ENCODE measurements at regions of chr5 and their contacts with region 1.

Region 1: DNA sequence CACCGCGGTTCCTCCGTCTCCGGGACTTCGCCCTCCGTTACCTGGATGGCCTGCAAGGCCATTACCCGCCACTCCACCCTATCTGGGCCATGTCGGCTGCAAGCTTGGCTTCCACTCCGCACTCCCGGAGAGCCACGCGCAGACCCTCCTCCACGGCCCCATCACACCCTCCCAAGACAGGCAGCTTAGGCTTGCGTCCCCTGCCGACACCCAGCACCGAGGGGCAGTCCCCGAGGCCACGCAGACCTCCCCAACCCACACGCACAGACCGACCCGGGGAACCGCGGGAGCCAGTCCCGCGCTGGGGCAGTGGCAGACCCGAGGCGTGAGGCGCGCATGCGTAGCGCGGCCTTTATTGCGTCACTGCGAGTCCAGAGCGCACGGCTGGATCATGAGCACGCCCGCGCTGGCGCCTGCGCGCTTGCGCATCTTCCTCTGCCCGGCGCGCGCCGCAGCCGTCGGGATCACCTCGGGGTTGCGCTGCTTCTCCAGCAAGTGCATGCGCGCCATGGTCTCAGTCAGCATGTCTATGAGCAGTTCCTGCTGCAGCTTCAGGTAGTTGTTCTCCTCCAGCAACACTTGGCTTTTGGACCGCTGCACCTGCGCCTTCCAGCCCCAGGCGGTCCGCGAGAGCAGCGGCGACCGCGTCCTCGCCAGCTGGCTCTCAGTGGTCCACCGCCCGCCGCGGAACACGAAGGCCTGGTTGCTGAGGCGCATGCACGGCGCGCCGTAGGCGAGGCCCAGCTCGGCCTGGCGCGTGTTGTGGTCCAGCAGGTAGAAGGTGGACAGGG is 2.4 kb downstream of the CBY3 start:
- DNase-seq: peak; percentile 97
- H3K4me3 ChIP-seq: peak overlapping the region; percentile 90
- H3K27ac ChIP-seq: peak overlapping the region; percentile 61
- H3K4me1 ChIP-seq: peaks cover 30% of the 10 kb centered on the region
- CTCF ChIP-seq: no peak

Region 2: DNA sequence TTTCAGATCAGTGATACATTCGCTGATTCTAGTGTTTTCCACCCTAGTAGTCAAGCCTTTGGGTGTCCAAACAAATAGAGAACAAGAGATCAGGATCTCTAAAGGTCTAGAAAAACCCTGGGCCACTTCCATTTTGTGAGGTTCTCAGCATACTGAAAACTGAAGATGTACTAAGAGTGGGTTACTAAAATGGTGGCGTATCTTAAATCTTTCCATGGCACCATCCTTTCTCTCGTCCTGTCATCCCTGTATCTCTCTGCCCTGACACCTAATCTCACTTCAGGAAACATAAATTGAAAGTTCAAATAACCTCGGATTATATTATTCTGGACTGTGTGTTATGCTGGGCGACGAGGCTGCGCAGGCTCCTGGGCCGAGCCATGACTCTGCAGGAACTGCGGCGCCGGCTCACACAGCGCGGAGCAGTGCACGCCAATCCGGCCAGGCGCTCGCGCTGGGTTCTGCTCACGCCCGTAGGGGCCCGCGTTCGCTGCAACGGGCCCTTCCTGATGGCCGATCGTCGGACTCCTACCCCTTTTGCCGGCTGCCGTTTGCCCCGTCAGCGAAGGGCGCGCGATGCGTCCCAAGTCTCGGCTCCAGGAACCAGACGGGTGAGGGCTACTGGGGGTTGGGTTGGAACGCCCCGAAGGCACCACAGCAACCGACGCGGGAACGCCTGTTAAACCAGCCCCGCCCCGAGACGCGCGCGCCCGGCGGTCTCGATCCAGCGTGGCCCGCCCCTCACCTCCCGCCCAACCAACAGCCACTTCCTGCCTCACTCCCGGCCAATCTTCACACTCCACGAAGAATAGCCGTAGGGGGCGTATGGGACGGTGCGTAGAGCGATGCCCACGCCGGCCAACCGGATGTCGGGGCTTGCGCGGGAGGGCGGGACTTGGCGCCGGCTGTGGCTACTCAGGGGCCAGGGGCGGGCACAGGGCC is 19.8 kb after region 1 on chr5:
- CTCF ChIA-PET with region 1: no interaction called
- POLR2A ChIA-PET with region 1: interaction called, 13 read pairs
- intact Hi-C with region 1: loop called (anchors 1 kb)
- DNase-seq: peak; percentile 99
- H3K4me3 ChIP-seq: peak overlapping the region; percentile 82
- H3K27ac ChIP-seq: peak overlapping the region; percentile 78
- H3K4me1 ChIP-seq: peaks cover 24% of the 10 kb centered on the region
- CTCF ChIP-seq: no peak

Region 3: DNA sequence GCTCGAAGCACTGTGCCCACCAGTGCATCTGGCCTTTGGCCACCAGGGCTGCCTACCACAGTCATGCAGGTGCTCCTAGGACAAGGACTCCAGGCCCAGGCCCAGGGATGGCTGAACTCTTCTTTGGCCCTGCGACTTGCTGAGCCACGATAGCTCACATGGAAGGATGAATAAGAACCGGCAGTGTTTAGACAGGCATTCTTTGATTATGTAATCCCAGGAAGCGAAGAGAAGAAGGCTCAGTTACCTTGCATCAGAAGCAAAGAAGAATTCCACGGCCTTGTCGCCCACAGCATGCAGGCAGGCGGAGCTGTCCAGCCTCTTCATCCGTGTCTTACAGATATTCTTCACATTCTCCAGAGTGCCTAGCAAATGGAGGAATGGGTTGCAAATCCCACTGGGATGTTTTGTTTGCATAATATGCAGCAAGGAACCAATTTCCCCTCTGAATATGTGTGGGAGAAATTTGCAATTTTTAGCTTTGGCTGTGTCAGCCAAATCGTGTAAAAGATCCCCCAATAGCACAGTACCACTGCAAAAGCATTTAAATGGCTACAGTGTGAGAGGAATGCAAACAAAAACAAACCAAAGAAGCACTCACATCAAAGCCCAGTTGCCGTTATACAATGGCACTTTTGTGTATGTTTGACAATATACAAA is 645.7 kb after region 1 on chr5:
- CTCF ChIA-PET with region 1: no interaction called
- POLR2A ChIA-PET with region 1: no interaction called
- intact Hi-C with region 1: no loop called
- DNase-seq: no peak
- H3K4me3 ChIP-seq: no peak overlapping the region
- H3K27ac ChIP-seq: no peak overlapping the region
- H3K4me1 ChIP-seq: no peaks in the 10 kb centered on the region
- CTCF ChIP-seq: no peak

Region 4: DNA sequence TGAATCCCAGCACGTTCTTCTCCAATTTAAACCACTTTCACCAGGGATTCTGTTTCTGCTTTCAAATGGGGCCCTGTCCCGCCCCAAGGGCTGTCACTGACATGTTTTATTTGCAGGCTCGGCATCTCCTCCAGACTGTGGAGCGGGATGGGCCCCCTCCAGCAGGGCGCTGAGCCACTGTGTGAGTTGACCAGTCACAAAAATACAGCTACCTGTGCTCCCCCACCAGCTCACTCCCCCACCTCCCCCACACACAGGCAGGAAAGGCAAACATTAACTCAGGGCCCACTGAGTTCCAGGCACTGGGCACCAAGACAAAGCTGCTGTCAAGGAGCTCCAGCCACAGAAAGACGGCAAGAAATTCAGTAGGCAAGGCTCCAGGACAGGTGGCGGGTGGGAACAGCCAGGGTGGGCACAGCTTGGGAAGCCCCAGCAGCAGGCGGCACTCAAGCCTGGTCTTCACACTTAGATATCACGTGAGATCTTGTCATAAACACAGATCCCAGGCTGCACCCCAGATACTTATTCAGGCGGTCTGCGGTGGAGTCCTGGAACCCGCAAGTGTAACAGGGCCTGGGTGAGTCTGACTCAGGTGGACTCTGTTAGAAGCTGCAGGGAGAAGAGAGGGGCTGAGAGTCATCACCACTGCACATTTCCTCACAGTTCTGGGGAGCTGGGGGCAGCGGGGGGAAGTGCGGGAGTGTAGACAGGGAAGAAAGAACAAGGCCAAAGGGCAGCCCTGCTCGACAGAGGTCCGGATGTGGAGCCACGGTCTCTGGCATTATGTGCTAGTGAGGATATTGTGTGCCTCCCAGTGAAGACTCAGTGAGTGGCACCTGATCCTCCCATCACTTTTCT is 1407.8 kb after region 1 on chr5:
- CTCF ChIA-PET with region 1: no interaction called
- POLR2A ChIA-PET with region 1: no interaction called
- intact Hi-C with region 1: no loop called
- DNase-seq: no peak
- H3K4me3 ChIP-seq: no peak overlapping the region
- H3K27ac ChIP-seq: no peak overlapping the region
- H3K4me1 ChIP-seq: no peaks in the 10 kb centered on the region
- CTCF ChIP-seq: no peak

Measured in OCI-LY7 (cell line).